ENCODE measurements at regions of chr13 and their contacts with region 1.

Region 1: DNA sequence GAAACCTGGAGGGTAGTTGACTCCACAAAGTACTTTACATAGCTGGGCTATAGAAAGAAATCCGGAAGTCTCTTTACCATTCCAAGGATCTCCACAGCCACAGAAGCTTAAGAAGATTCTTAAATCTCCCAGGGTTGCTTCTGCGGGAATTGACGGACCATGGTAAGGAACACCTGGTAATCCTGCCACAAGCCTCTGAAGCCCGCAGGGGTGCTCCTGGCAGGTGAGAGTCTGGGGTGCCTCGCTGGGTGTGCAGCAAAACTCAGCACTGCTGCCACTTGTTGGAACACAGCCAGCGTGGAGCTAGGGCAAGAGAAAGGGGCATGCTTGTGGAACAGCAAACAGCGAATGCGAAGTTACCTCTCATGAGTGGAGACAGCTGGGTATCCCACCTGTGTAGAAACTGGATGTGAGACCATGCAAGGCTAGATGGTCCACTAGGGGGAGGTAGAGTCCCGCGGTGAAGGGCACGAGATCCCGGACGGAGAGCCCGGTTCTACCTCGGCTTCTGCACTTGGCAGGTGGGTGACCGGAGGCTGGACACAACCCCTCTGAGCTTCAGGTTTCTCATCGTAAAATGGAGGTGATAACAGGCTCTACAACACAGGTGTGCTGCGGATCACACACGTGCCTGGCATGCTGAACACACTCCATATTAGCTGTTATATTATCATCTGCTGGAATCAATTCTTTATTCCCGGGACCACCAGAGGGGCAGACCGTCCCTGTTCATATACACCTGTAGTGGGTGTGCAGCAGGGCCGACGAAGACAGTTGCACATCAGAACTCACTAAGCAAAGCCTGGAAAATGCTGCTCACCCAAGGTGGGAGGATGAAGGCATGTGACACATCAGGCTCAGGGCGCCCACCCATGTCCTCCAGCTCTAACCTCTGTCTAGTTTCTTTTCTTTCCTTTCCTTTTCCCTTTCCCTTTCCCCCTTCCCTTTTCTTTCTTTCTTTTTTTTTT is 24.1 kb upstream of the UBAC2 start:
- DNase-seq: no peak
- H3K4me3 ChIP-seq: peak overlapping the region in 1 of 4 donors; percentile 43
- H3K27ac ChIP-seq: no peak overlapping the region
- H3K4me1 ChIP-seq: peaks cover 6 to 40% (median 7%) of the 10 kb centered on the region in 3 donors
- H3K27me3 ChIP-seq: peaks cover 0 to 6% (median 0%) of the 10 kb centered on the region in 4 donors
- CTCF ChIP-seq: peak; percentile 82 to 94 (median 88)
- POLR2A ChIP-seq: no peak

Region 2: GRCh38 chr13:99269627-99270241 is 93.1 kb after region 1 on chr13:
- intact Hi-C with region 1: loop called (anchors 5 kb)
- DNase-seq: no peak
- H3K4me3 ChIP-seq: no peak overlapping the region
- H3K27ac ChIP-seq: peak overlapping the region in 3 of 4 donors; percentile 6 to 41 (median 9)
- H3K4me1 ChIP-seq: peaks cover 0 to 2% (median 0%) of the 10 kb centered on the region in 3 donors
- H3K27me3 ChIP-seq: no peaks in the 10 kb centered on the region
- CTCF ChIP-seq: peak; percentile 48 to 77 (median 70)
- POLR2A ChIP-seq: no peak